Keratinocyte (primary cell): ENCODE measurements at regions of chr7 and their contacts with region 1.

Region 1: GRCh38 chr7:36986429-36987362 is 262.4 kb upstream of the AOAH start:
- DNase-seq: no peak
- H3K4me3 ChIP-seq: no peak overlapping the region
- H3K27ac ChIP-seq: no peak overlapping the region
- H3K4me1 ChIP-seq: no peaks in the 10 kb centered on the region
- H3K27me3 ChIP-seq: peaks cover 7% of the 10 kb centered on the region
- CTCF ChIP-seq: peak; percentile 88 to 93 (median 92)

Region 2: DNA sequence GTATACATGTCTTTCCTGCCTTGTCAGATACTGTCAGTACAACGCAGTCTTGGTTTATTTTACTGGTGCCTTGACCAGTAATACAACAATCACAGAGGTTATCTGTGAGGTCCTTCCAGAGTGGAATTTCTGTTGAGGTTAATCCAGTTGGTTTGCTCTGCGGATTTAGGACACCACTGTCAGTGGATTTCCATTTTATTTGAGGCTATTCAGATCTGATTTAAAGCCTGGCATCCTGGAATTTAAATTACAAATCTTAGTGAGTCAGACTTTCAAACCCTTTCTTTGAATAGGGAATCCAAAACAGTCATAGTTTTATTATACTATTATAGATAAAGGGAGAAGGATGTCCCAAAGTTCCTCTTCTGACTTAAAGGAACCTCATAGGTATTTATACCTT is 556.5 kb before region 1 on chr7:
- dilution Hi-C with region 1: no loop called
- DNase-seq: no peak
- H3K4me3 ChIP-seq: no peak overlapping the region
- H3K27ac ChIP-seq: no peak overlapping the region
- H3K4me1 ChIP-seq: no peaks in the 10 kb centered on the region
- H3K27me3 ChIP-seq: no peaks in the 10 kb centered on the region
- CTCF ChIP-seq: no peak

Region 3: GRCh38 chr7:37162106-37162505 is 175.4 kb after region 1 on chr7:
- dilution Hi-C with region 1: no loop called
- DNase-seq: no peak
- H3K4me3 ChIP-seq: no peak overlapping the region
- H3K27ac ChIP-seq: no peak overlapping the region
- H3K4me1 ChIP-seq: no peaks in the 10 kb centered on the region
- H3K27me3 ChIP-seq: no peaks in the 10 kb centered on the region
- CTCF ChIP-seq: no peak

Region 4: DNA sequence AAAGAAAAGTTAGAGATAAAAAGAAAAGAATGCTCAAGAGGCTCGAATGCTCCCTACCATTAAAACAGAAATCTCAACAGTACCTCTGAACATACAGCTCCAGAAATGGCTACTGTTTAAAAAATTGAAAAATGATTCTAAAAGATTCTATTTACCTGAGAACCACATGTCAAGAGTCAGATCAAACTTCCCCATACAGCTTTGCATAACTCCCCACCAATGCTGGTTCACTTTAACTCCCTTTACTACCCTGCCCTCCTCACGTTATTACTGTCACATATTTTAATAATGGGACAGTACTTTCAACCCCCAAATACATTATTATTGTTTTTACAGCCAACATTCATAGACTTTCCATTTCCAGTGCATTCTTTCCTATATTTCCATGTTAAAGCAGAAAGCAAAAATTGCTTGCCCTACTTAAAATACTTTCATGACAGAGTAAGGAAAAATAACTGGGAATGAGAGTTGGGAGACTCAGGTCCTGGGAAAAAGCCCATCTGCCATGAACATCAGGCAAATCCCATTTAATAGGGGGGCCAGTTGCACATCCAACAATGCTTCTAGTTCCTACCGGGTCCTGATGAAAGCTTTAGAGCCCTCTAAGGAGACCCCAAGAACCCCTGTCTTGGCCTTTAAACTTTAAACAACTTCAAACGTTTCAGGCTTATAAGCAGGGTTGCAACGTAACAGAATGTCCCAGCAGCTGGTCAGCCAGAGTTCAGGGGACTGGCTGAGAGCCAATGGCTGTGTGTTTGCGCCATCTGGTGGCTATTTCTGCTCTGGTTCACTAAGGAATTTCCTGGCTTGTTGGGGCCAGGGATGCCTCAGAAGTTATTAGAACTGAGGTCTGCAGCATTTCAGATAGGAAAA is 214.5 kb after region 1 on chr7:
- dilution Hi-C with region 1: loop called (anchors 25 kb)
- DNase-seq: no peak
- H3K4me3 ChIP-seq: no peak overlapping the region
- H3K27ac ChIP-seq: no peak overlapping the region
- H3K4me1 ChIP-seq: no peaks in the 10 kb centered on the region
- H3K27me3 ChIP-seq: no peaks in the 10 kb centered on the region
- CTCF ChIP-seq: peak; percentile 83 to 91 (median 83)